Right cardiac atrium (tissue), 5 donors: ENCODE measurements at regions of chr4 and their contacts with region 1.

Region 1: DNA sequence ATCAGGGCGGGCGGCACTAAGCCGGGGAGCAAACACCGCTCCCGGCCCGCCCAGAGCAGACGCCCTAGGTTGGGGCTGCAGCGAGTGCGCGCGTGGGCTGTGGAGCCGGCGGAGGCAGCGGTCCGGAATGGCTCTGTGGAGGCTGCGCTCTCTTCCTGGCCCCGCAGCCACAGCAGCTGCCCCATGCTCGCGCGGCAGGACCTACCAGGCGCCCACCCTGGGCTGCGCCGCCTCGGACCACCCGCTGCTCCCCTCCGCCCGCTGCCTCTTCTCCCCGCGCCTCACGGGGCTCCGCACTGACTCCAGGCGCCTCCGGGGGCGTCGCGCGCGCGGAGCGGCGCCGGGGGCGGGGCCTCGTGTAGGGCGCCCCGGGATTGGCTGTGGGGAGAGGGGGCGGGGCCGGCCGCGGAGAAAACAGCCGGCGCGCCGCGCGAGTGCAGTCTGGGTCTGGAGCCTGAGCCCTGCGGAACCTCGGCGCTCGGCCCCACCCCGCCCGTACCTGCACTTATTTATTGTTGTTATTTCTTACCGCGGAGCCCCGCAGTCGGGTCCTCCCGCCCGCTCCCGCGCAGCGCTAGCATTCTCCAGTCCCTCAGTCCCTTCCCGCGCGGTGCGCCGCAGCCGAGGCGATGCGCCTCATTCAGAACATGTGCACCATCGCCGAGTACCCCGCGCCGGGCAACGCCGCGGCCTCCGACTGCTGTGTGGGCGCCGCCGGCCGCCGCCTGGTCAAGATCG is at the start of gene RASL11B:
- DNase-seq: peak; percentile 85 to 96 (median 96)
- ATAC-seq: peak; percentile 98 to 99
- H3K4me3 ChIP-seq: peak within 1 kb of the TSS; percentile 49
- H3K27ac ChIP-seq: peak within 1 kb of the TSS; percentile 50
- H3K4me1 ChIP-seq: no peaks in the 10 kb centered on the region
- H3K27me3 ChIP-seq: no peaks in the 10 kb centered on the region
- total RNA-seq, gene RASL11B: 9.6 to 37.2 (median 16.5) TPM

Region 2: DNA sequence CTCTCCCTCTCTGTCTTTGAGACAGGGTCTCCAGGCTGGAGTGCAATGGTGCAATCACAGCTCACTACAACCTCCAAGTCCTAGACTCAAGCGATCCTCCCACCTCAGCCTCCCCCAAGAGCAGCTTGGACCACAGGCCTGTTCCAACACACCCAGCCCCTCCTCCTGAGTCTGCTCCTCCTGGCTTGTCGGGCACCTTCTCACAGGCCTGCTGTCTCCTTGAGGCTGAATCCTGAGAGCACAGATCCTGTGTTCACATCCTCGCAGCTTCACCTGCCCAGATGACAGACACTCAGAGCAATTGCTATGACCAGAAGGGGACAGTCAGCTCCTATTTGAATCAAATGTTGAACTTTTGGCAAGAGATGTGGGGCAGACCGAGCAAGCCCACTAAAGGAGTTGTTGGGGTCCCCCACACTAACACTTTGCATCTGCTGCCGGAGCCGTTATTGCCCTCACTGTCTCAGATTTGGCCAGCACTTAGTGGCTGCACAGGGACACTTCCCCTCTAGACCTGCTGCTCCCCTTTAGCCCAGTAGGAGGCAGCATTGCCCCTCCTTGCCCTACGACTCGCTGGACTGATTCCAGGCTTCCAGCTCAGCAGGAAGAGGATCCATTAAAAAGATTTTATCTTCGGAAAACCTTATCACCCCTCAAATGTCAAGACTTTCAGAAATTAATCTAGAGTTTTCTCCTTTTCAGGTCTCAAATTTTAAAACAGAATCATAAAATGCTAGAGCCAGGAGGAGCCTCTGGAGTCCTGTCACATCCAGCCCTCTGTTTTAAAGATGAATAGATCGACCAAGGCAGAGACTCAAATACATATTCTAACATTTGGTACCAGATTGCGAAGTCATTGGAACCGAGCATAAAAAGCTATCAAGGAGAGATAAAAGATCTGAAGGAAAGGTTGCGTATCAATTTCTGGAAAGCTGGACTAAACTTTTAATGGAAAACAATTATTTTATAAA is 316.7 kb before region 1 on chr4:
- intact Hi-C with region 1: loop called in 1 of 4 experiments (anchors 5 kb)
- DNase-seq: peak; percentile 75 to 92 (median 84)
- ATAC-seq: peak; percentile 87 to 91
- H3K4me3 ChIP-seq: peak overlapping the region; percentile 23
- H3K27ac ChIP-seq: no peak overlapping the region
- H3K4me1 ChIP-seq: no peaks in the 10 kb centered on the region
- H3K27me3 ChIP-seq: no peaks in the 10 kb centered on the region

Region 3: DNA sequence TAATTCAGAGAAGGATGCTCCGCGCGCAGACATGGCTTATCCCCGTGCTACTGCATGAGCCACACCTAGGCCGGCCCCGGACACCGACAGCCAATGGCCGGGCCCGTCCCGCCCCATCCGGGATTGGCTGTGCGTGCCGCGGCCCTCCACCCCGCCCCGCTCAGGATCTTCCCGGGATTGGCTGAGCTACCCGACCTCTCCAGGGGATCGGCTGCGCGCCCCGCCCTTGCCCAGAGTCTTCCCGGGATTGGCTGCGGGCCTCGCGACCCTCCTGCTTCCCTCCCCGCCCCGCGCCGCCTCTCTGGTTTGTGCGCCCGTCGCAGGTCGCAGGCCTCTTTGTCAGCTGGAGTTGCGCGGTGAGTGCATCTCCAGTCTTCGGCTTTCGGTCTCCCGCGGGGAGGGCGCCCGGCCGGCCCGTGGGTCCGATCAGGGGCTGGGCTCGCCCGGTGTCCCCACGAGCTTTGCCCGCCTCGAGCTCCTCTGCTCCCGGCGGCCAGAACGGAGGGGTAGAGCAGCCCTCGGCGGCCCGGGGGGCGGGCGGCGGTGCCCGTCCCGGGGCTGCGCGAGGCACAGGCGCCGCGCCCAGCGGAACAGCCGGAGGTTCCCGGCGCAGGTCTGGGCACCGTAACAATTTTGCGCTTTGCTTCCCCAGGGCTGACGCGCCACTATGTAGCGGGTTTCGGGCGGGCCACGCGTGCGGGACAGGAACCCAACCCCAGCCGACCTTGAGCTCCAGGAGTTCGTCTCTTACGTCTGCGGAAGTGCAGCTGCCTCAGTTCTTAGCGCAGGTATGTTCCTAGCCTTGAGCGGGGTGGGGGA is 149.7 kb before region 1 on chr4:
- intact Hi-C with region 1: loop called in 1 of 4 experiments (anchors 10 kb)
- DNase-seq: peak; percentile 99 to 100 (median 99)
- ATAC-seq: peak; percentile 100
- H3K4me3 ChIP-seq: peak overlapping the region; percentile 93
- H3K27ac ChIP-seq: peak overlapping the region; percentile 98
- H3K4me1 ChIP-seq: peaks cover 4% of the 10 kb centered on the region
- H3K27me3 ChIP-seq: no peaks in the 10 kb centered on the region

Region 4: GRCh38 chr4:52721968-52722815 is 139.9 kb before region 1 on chr4:
- intact Hi-C with region 1: loop called in 3 of 4 experiments (anchors 2 to 10 kb)
- DNase-seq: peak; percentile 93 to 97 (median 96)
- ATAC-seq: peak; percentile 99 to 100
- H3K4me3 ChIP-seq: peak overlapping the region; percentile 52
- H3K27ac ChIP-seq: peak overlapping the region; percentile 98
- H3K4me1 ChIP-seq: no peaks in the 10 kb centered on the region
- H3K27me3 ChIP-seq: no peaks in the 10 kb centered on the region

Region 5: DNA sequence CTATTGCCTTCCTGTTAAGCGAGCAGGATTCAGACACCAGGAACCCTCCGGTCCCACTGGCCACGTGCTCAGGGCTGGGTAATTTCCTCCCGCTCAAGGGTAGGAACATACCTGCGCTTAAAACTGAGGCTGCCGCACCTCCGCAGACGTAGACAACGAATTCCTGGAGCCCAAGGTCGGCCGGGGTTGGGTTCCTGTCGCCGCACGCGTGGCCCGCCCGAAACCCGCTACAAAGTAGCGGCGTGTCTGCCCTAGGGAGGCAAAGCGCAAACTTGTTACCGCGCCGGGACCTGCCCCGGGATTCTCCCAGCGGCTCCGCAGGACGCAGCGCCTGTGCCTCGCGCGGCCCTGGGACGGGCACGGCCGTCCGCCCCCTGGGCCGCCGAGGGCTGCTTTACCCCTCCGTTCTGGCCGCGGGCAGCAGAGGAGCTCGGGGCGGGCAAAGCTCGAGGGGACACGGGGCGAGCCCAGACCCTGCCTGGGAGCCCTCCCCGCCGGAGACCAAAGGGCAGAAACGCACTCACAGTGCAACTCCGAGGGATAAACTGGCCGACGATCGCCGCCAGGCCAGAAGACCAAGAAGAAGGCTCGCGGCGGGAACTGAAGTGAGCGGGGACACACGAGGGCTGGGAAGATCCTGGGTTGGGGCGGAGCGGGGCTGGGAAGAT is 111.1 kb before region 1 on chr4 and contains the start of gene ERVMER34-1:
- intact Hi-C with region 1: loop called in 1 of 4 experiments (anchors 10 kb)
- DNase-seq: peak; percentile 24 to 54 (median 44)
- ATAC-seq: peak; percentile 74 to 84
- H3K4me3 ChIP-seq: peak within 1 kb of the TSS; percentile 37
- H3K27ac ChIP-seq: no peak within 1 kb of the TSS
- H3K4me1 ChIP-seq: no peaks in the 10 kb centered on the region
- H3K27me3 ChIP-seq: no peaks in the 10 kb centered on the region
- total RNA-seq, gene ERVMER34-1: 1.0 to 3.8 (median 2.9) TPM

Region 6: GRCh38 chr4:52957220-52957686 is 95.2 kb after region 1 on chr4:
- intact Hi-C with region 1: loop called in 1 of 4 experiments (anchors 10 kb)
- DNase-seq: peak in 2 of 3 donors; percentile 46 to 56
- ATAC-seq: peak; percentile 53 to 79
- H3K4me3 ChIP-seq: no peak overlapping the region
- H3K27ac ChIP-seq: peak overlapping the region; percentile 73
- H3K4me1 ChIP-seq: no peaks in the 10 kb centered on the region
- H3K27me3 ChIP-seq: no peaks in the 10 kb centered on the region